Gastrocnemius medialis (tissue), 4 donors: ENCODE measurements at regions of chr19 and their contacts with region 1.

Region 1: DNA sequence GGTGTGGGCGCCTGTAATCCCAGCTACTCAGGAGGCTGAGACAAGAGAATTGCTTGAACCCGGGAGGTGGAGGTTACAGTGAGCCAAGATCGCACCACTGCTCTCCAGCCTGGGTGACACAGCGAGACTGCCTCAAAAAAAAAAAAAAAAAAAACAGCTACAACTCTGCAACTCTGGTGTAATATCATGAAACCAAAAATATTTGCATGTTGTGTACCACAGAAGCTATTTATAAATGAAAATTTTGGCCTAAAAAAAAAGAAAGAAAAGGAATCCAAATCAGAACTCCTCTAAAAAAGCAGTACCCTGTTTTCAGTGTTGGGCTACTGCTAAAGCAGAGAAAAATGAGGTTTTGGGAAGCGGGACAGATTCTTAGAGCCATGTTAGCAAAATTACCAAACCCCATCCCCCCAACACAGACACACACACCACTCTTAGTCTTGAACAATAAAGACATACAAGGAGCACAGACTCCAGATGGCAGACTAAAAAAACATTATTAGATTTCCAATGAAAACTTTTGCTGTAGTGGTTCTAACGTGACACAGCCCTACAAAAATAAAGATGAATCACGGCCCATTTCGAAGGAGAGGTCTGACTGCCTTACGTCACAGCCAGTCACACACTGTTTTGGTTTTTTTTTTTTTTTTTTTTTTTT is 51.5 kb downstream of the INSR start:
- DNase-seq: peak in 1 of 2 donors; percentile 29
- ATAC-seq: peak; percentile 89 to 99
- H3K4me3 ChIP-seq: no peak overlapping the region
- H3K27ac ChIP-seq: peak overlapping the region; percentile 77 to 87 (median 82)
- H3K4me1 ChIP-seq: peaks cover 22 to 28% of the 10 kb centered on the region in 2 donors
- H3K27me3 ChIP-seq: no peaks in the 10 kb centered on the region
- CTCF ChIP-seq: no peak
- POLR2A ChIP-seq: no peak

Region 2: GRCh38 chr19:7260191-7260590 is 17.5 kb after region 1 on chr19:
- in situ Hi-C with region 1: no loop called
- intact Hi-C with region 1: loop called (anchors 2 kb)
- DNase-seq: no peak
- ATAC-seq: no peak
- H3K4me3 ChIP-seq: no peak overlapping the region
- H3K27ac ChIP-seq: peak overlapping the region in 2 of 4 donors; percentile 20 to 57
- H3K4me1 ChIP-seq: peaks cover 40 to 59% of the 10 kb centered on the region in 2 donors
- H3K27me3 ChIP-seq: no peaks in the 10 kb centered on the region
- CTCF ChIP-seq: no peak
- POLR2A ChIP-seq: no peak

Region 3: DNA sequence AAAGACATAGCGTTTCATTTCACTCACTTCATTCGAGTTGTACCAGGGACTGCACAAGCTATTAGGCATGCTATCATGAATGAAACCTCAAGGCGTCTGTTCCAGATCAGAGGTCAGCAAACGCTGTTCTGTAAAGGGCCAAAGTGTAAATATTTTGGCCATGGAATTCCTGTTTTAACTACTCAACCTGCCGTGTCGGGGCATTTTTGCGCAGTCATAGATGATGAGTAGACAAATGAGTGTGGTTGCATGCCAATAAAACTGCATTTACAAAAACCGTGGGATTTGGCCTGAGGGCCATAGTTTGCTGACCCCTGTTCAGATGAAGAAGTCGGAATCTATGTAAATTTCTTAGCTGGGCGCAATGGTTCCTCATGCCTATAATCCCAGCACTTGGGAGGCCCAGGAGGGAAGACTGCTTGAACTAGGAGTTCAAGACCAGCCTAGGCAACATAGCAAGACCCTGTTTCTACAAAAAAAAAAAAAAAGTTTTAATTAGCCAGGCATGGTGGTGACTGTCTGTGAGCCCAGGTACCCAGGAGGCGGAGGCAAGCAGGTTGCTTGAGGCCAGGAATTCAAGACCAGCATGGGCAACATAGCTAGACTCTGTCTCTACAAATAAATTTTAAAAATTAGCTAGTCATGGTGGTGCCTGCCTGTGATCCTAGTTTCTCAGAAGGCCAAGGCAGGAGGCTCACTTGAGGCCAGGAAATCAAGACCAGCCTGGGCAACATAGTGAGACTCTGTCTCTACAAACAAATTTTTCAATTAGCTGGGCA is 45.2 kb after region 1 on chr19:
- in situ Hi-C with region 1: loop called in 1 of 4 experiments (anchors 5 kb)
- intact Hi-C with region 1: no loop called
- DNase-seq: no peak
- ATAC-seq: no peak
- H3K4me3 ChIP-seq: no peak overlapping the region
- H3K27ac ChIP-seq: peak overlapping the region in 3 of 4 donors; percentile 13 to 58 (median 32)
- H3K4me1 ChIP-seq: peaks cover 5 to 7% of the 10 kb centered on the region in 2 donors
- H3K27me3 ChIP-seq: no peaks in the 10 kb centered on the region
- CTCF ChIP-seq: no peak
- POLR2A ChIP-seq: no peak